Right cardiac atrium (tissue), 5 donors: ENCODE measurements at regions of chr15 and their contacts with region 1.

Region 1: DNA sequence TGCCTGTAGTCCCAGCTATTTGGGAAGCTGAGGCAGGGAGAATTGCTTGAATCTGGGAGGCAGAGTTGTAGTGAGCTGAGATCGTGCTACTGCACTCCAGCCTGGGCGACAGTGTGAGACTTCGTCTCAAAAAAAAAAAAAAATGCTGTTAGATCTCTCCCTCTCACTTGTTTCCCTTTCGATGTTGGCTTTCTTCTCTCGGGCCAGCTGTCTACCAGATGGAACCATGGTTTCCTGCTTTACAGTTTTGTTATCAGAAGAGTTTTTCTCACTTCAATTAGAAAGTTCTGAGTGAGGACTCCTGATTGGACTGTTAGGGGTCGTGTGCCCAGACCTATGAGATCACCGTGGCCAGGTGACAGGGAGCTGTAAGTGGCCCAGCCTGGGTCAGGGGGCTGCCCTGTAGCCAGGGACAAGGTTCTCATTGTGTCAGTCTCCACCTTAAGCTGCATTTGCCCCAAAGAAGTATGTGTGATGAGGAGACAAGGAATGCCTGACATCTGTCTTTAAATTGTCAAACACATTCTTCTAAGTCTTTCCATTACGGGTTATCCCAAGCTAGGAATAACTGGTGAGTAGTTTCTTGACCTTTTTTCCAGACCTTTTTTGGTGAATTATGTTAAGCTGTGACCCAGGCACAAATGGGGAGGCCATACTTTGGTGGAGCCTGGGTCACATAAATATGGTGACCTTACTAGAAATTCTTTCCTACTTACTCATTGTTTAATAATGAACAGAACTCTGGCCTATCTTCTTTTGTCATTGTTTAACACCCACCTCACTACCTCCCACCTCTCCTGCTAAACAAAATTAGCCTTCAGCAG is 25.2 kb downstream of the SNAPC5 start:
- DNase-seq: no peak
- ATAC-seq: peak; percentile 62 to 67
- H3K4me3 ChIP-seq: no peak overlapping the region
- H3K27ac ChIP-seq: no peak overlapping the region
- H3K4me1 ChIP-seq: no peaks in the 10 kb centered on the region
- H3K27me3 ChIP-seq: no peaks in the 10 kb centered on the region

Region 2: GRCh38 chr15:66401130-66402021 is 71.0 kb before region 1 on chr15:
- intact Hi-C with region 1: loop called in 1 of 4 experiments (anchors 10 kb)
- DNase-seq: no peak
- ATAC-seq: no peak
- H3K4me3 ChIP-seq: no peak overlapping the region
- H3K27ac ChIP-seq: no peak overlapping the region
- H3K4me1 ChIP-seq: peaks cover 6% of the 10 kb centered on the region
- H3K27me3 ChIP-seq: no peaks in the 10 kb centered on the region

Region 3: DNA sequence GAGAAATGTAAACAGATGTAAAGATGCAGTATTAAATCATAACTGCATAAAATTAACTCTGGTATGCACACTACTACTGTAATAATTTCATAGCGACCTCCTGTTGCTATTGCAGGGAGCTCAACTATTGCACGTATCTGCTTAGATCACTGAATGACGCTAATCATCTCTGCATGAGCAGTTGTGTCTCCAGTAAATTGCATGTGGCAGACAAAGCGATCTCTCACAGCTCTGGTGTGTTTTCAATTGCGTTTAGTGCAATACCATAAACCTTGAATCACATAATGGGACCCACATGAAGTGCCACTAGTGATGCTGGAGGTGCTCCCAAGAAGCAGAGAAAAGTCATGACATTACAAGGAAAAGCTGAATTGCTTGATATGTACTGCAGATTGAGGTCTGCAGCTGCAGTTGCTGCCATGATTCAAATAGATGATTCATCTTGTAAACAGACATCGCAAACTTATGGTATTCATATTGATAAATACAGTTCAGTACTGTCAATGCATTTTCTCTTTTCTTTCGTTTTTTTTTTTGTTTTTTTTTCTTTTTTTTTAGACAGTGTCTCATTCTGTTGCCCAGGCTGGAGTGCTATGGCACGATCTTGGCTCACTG is 123.7 kb after region 1 on chr15:
- intact Hi-C with region 1: no loop called
- DNase-seq: no peak
- ATAC-seq: no peak
- H3K4me3 ChIP-seq: no peak overlapping the region
- H3K27ac ChIP-seq: no peak overlapping the region
- H3K4me1 ChIP-seq: no peaks in the 10 kb centered on the region
- H3K27me3 ChIP-seq: no peaks in the 10 kb centered on the region